ENCODE measurements at regions of chr3 and their contacts with region 1.

Region 1: GRCh38 chr3:13895155-13896105 is 15.6 kb upstream of the WNT7A start:
- DNase-seq: peak; percentile 98
- H3K4me3 Mint-ChIP-seq: peak overlapping the region; percentile 85
- H3K27ac Mint-ChIP-seq: peak overlapping the region; percentile 75
- H3K4me1 Mint-ChIP-seq: peaks cover 33% of the 10 kb centered on the region
- H3K27me3 Mint-ChIP-seq: peaks cover 4% of the 10 kb centered on the region

Region 2: GRCh38 chr3:13718436-13718835 is 177.0 kb before region 1 on chr3:
- CTCF ChIA-PET with region 1: no interaction called
- POLR2A ChIA-PET with region 1: no interaction called
- DNase-seq: no peak
- H3K4me3 Mint-ChIP-seq: no peak overlapping the region
- H3K27ac Mint-ChIP-seq: no peak overlapping the region
- H3K4me1 Mint-ChIP-seq: no peaks in the 10 kb centered on the region
- H3K27me3 Mint-ChIP-seq: peaks cover 12% of the 10 kb centered on the region

Region 3: DNA sequence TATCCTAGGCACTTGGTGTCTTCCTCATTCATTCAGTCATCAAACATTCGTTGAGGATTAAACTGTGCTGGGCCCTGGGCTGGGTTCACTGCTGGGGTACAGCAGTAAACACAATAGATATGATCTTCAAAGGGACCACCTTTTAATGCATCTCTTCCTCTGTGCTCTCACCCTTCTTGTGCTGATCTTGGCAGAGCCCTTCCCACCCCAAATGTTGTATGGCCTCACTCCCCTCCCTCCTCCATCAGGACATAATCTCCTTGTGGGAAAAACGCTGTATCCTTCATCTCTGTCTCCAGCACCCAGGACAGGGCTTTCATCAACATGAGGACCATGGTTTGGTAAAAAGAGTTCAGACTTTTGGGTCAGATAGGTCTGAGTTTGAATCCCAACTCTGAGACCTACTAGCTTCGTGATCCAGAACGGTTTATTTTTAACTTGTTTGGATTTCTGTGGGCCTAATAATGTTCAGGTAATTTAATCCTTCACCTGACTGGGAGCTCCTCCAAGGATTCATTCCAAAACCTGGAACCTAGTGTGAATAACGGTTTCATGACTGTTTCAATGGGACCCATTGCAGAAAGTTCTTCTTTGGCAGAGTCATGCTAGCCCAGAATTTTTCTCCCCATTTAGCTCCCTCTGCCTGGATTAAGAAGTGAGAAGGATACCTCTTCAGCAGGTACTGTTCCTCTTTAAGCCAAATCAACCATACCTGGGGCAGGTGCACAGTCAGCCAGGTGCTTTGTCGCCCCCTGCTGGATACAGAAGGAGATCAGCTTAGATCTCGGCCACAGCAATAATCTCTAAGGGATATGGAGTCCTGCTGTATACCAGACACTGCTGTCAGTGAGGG is 10.4 kb before region 1 on chr3:
- CTCF ChIA-PET with region 1: interaction called, 15 read pairs
- POLR2A ChIA-PET with region 1: no interaction called
- DNase-seq: peak; percentile 72
- H3K4me3 Mint-ChIP-seq: no peak overlapping the region
- H3K27ac Mint-ChIP-seq: no peak overlapping the region
- H3K4me1 Mint-ChIP-seq: peaks cover 6% of the 10 kb centered on the region
- H3K27me3 Mint-ChIP-seq: peaks cover 46% of the 10 kb centered on the region

Region 4: GRCh38 chr3:14113965-14114635 is 218.7 kb after region 1 on chr3:
- CTCF ChIA-PET with region 1: interaction called, 14 read pairs
- POLR2A ChIA-PET with region 1: no interaction called
- DNase-seq: no peak
- H3K4me3 Mint-ChIP-seq: no peak overlapping the region
- H3K27ac Mint-ChIP-seq: no peak overlapping the region
- H3K4me1 Mint-ChIP-seq: no peaks in the 10 kb centered on the region
- H3K27me3 Mint-ChIP-seq: no peaks in the 10 kb centered on the region

Region 5: DNA sequence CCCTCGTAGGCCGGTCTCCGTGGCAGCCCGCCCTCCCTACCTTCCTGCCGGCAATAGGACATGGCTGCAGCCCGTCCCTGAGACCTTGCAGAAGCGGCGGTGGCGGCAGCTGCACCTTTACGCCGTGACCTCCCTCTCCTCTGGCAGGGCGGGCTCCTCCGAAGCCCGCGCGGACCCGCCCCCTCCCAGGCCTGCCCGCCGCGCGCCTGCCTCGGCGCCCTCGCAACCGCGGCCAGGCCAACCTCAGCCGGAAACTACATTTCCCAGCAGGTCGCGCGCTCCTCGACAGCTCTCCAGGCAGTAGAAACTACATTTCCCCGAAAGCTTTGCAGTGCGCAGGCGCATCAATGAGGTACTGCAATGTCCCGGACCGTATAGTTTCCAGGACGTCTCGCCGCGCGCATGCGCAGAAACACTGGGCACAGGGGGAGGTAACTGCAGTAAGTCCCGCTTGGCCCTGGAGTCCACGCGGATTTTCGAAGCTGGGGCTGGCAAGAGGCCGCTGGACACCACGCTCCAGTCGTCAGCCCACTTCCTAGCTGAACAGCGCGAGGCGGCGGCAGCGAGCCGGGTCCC is 229.3 kb after region 1 on chr3 and contains the starts of genes CHCHD4 and TMEM43:
- CTCF ChIA-PET with region 1: interaction called, 22 read pairs
- POLR2A ChIA-PET with region 1: interaction called, 8 read pairs
- DNase-seq: peak; percentile 99
- H3K4me3 Mint-ChIP-seq: peak within 1 kb of the TSS; percentile 92
- H3K27ac Mint-ChIP-seq: peak within 1 kb of the TSS; percentile 90
- H3K4me1 Mint-ChIP-seq: peaks cover 61% of the 10 kb centered on the region
- H3K27me3 Mint-ChIP-seq: no peaks in the 10 kb centered on the region
- total RNA-seq, gene CHCHD4: 11.5 to 12.8 TPM
- total RNA-seq, gene TMEM43: 43.6 to 46.0 TPM

Region 6: GRCh38 chr3:14203521-14204079 is 308.2 kb after region 1 on chr3:
- CTCF ChIA-PET with region 1: interaction called, 15 read pairs
- POLR2A ChIA-PET with region 1: no interaction called
- DNase-seq: peak; percentile 48
- H3K4me3 Mint-ChIP-seq: no peak overlapping the region
- H3K27ac Mint-ChIP-seq: no peak overlapping the region
- H3K4me1 Mint-ChIP-seq: no peaks in the 10 kb centered on the region
- H3K27me3 Mint-ChIP-seq: no peaks in the 10 kb centered on the region

Measured in activated CD4-positive, alpha-beta memory T cell treated with anti-CD3 and anti-CD28 coated beads, Interleukin-2, amount 10 ng/mL, durations not matched to agents 7 days and 5 days (primary cell).